ENCODE measurements at regions of chr13 and their contacts with region 1.

Region 1: DNA sequence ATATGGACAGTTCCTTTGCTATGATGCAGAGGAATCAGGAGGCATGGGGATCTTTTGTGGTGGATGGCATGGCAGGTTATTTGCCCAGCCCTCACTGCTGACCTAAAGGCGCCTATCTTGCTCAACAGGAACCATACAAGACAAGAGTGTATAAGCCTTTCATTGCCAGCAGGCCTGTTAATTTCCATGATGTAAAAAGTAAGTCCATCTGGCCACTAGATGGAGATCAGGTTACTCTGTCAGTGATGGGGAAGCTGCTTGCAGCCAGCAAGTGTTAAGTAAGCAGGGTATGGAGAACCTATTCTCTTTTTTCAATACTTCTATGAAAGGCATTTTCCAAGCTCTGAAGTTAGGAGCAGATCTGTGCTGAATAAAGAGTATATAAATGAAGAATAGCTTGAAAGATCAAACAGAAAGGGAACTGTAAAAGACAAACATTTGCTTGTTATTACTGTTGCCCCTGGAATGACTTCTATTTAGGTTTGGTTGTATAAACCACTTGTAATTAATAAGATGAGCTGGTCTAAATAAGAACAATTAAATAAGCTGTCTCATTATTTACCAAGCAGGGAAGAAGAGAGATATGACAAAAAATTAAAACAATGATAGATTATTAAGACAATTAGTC is 210.9 kb downstream of the RGCC start:
- DNase-seq: no peak
- H3K4me3 ChIP-seq: no peak overlapping the region
- H3K27ac ChIP-seq: no peak overlapping the region
- H3K4me1 ChIP-seq: no peaks in the 10 kb centered on the region
- H3K27me3 ChIP-seq: no peaks in the 10 kb centered on the region
- CTCF ChIP-seq: peak; percentile 32 to 82 (median 65)
- POLR2A ChIP-seq: no peak

Region 2: DNA sequence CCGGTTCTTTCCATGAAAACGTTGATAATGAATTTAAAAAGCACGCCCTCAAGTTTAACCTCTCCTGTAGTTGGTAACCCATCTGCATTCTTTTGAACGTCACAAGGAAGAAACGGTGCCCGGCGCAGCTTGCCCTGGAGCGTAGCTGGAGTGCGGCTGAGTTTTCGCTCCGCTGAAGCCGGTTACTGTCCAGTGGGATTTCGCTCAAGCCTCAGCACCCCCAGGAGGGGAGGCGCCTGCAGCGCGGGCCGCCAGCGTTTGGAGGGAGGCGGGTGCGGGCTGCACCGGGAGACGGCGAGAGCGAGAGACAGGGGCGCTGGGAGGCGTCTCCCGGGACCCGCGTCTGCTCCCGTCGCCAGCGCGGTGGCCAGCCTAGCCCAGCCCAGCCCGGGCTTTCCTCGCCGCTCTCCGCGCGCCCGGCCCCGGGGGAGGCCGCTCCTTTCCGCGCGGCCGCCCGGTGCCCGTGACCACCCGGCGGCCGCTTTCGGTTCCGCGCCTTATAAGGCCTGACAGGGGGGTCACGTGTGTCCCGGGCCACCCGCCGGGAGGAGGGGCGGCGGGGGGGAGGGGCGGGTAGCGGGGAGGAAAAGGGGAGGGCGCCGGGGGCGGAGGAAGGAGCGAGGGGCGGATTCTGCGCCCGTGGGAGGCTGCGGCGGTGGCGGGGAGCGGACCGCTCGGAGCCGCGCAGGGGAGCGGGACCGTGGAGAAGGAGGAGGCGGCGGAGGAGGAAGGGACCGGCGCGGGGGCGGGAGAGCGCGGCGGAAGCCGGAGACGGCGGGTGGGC is 371.9 kb after region 1 on chr13:
- intact Hi-C with region 1: no loop called
- DNase-seq: peak; percentile 96
- H3K4me3 ChIP-seq: peak overlapping the region; percentile 72 to 92 (median 82)
- H3K27ac ChIP-seq: peak overlapping the region; percentile 83 to 94 (median 92)
- H3K4me1 ChIP-seq: peaks cover 9 to 29% (median 25%) of the 10 kb centered on the region in 6 donors
- H3K27me3 ChIP-seq: peaks cover 0 to 18% (median 0%) of the 10 kb centered on the region in 7 donors
- CTCF ChIP-seq: peak in 4 of 11 experiments; percentile 5 to 43 (median 22)
- POLR2A ChIP-seq: peak in 1 of 3 donors; percentile 71

Region 3: GRCh38 chr13:42110410-42111155 is 442.3 kb after region 1 on chr13:
- intact Hi-C with region 1: loop called (anchors 5 kb)
- DNase-seq: no peak
- H3K4me3 ChIP-seq: no peak overlapping the region
- H3K27ac ChIP-seq: no peak overlapping the region
- H3K4me1 ChIP-seq: peaks cover 0 to 11% (median 6%) of the 10 kb centered on the region in 6 donors
- H3K27me3 ChIP-seq: no peaks in the 10 kb centered on the region
- CTCF ChIP-seq: peak; percentile 50 to 84 (median 68)
- POLR2A ChIP-seq: no peak

Measured in spleen (tissue), 13 donors.